ENCODE measurements at regions of chr2 and their contacts with region 1.

Region 1: DNA sequence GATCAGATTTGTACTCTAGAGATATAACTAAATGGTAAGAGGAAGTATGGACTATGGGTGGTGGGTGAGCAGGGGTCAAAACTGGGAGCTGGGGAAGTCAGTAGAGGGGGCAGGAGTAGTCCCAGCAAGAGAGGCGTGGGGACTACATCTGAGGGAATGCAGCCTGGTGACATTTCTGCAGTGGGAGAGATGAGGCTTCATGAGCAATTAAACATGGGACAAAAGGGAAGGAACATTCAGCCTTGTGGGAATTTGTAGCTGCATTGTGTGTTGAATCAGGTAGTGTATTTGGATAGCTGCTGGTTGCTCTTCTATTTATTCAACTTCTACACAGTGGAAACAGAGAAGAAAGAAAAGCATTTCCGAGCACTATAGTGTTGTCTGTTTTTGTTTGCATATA is 3.6 kb downstream of the CNOT11 start:
- DNase-seq: no peak
- H3K4me3 ChIP-seq: no peak overlapping the region
- H3K27ac ChIP-seq: no peak overlapping the region
- H3K4me1 ChIP-seq: peaks cover 4% of the 10 kb centered on the region
- H3K27me3 ChIP-seq: no peaks in the 10 kb centered on the region
- CTCF ChIP-seq: no peak

Region 2: GRCh38 chr2:101759162-101759561 is 502.8 kb after region 1 on chr2:
- CTCF ChIA-PET with region 1: no interaction called
- POLR2A ChIA-PET with region 1: interaction called, 10 read pairs
- intact Hi-C with region 1: no loop called
- DNase-seq: peak; percentile 80
- H3K4me3 ChIP-seq: no peak overlapping the region
- H3K27ac ChIP-seq: peak overlapping the region; percentile 63
- H3K4me1 ChIP-seq: peaks cover 60% of the 10 kb centered on the region
- H3K27me3 ChIP-seq: no peaks in the 10 kb centered on the region
- CTCF ChIP-seq: no peak